ENCODE measurements at regions of chr2 and their contacts with region 1.

Region 1: DNA sequence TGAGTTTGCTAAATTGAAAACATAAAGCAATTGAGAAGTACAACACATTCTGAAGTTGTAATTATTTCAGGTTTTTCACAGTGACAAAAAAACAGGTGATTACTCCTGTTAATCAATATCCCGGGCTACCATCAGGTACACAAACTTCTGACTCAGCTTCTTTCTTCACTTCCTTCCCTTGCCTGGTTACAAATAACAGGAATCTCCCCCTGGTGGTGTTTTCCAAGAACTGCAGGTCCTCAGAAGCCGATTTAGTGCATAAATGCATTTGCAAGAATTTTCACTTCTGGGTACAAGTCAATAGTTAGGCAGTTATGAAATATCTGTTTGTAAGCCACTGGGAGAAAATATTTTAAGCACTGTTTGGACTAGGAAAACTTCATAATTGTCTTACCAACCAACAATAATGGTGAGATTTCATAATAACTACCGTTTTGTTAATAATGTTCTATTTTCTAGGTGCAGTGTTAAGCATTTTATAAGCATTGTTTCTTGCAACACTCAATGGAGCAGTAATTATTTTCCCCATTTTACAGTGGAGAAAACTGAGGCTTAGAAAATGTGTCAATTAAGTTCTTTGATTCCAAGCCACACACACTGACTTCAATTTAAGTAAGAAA is 12.4 kb upstream of the GMCL1 start:
- DNase-seq: peak; percentile 87
- ATAC-seq: peak; percentile 75
- H3K4me3 Mint-ChIP-seq: no peak overlapping the region
- H3K27ac Mint-ChIP-seq: no peak overlapping the region
- H3K4me1 Mint-ChIP-seq: peaks cover 11% of the 10 kb centered on the region
- H3K27me3 Mint-ChIP-seq: no peaks in the 10 kb centered on the region

Region 2: DNA sequence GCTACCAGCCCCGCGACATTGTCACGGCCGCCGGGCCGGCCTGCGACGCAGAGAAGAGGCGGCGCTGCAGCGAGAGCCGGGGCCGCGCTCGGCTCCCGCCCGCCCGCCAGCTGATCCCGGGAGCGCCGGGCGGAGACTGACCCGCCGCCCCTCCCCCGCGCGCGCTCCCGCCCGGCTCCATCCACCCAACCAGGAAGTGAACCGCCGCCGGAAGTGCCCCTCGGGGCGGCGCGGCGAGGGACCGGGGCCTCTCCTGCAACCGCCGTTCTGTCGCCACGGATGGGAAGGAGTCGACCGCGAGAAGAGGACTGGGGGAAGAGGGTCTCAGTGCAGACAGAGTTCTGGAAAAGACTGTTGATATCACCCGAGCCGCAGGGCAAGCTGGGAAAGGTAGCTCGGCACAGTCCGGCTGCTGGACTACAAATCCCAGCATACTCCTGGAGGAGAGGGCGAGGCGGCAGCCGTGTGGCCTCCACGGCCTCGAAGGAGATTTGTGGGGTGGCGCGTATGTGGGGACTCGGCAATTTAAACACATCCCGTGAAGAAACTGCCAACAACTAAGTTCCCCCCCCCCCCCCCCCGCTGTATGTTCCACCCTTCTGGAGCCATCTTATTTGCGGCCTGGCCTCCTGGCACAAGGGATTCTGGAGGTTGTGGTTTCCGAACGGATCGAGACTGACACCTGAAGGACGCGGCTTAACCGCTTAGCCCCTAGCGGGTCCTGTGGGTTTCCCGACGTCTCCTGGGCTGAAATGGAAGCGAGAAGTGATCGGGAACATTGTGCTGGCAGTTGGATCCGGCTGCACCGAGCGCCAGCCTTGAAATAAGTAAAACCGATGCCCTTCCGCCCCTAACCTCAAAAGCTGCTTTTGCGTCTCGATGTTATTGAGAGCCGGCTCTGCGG is 173.2 kb before region 1 on chr2 and contains the start of gene AAK1:
- CTCF ChIA-PET with region 1: interaction called, 17 read pairs
- POLR2A ChIA-PET with region 1: no interaction called
- DNase-seq: peak; percentile 90
- ATAC-seq: peak; percentile 66
- H3K4me3 Mint-ChIP-seq: peak within 1 kb of the TSS; percentile 92
- H3K27ac Mint-ChIP-seq: peak within 1 kb of the TSS; percentile 98
- H3K4me1 Mint-ChIP-seq: peaks cover 56% of the 10 kb centered on the region
- H3K27me3 Mint-ChIP-seq: no peaks in the 10 kb centered on the region
- total RNA-seq, gene AAK1: 105 to 107 TPM

Region 3: GRCh38 chr2:69741619-69742466 is 75.2 kb before region 1 on chr2 and contains the start of gene ANXA4:
- CTCF ChIA-PET with region 1: interaction called, 58 read pairs
- POLR2A ChIA-PET with region 1: interaction called, 5 read pairs
- DNase-seq: peak; percentile 68
- ATAC-seq: peak; percentile 95
- H3K4me3 Mint-ChIP-seq: peak within 1 kb of the TSS; percentile 80
- H3K27ac Mint-ChIP-seq: peak within 1 kb of the TSS; percentile 85
- H3K4me1 Mint-ChIP-seq: peaks cover 19% of the 10 kb centered on the region
- H3K27me3 Mint-ChIP-seq: peaks cover 13% of the 10 kb centered on the region
- total RNA-seq, gene ANXA4: 53.5 to 59.5 TPM

Region 4: DNA sequence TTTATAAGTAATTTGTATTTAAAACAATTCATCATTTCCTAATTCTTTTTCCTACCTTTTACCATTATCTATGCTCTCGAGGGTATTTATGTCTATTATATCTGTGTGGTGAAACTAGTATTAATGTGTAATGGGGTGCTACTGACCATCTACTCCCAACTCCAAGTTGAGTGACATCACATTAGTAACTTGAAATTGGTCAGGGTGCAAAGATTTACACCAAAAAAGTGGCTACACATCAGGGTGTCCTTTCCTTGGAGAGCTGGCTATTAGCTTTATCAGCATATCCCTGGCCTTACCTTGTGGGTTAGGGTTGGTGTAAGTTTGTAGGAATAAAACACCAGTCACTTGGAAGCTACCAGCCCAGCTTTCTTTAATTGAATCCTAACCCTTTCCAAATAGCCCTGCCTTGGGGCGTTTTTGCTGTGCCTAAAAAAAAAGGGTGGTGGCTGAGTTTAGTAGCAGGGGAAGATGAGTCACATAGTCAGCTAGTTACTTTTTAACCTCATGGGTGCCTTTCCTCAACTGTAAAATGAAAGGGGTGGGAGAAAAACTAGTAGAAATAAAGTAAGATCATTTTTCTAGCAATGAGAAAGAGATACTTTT is 61.1 kb before region 1 on chr2:
- CTCF ChIA-PET with region 1: interaction called, 23 read pairs
- POLR2A ChIA-PET with region 1: no interaction called
- DNase-seq: no peak
- ATAC-seq: peak; percentile 55
- H3K4me3 Mint-ChIP-seq: no peak overlapping the region
- H3K27ac Mint-ChIP-seq: no peak overlapping the region
- H3K4me1 Mint-ChIP-seq: peaks cover 15% of the 10 kb centered on the region
- H3K27me3 Mint-ChIP-seq: no peaks in the 10 kb centered on the region

Region 5: DNA sequence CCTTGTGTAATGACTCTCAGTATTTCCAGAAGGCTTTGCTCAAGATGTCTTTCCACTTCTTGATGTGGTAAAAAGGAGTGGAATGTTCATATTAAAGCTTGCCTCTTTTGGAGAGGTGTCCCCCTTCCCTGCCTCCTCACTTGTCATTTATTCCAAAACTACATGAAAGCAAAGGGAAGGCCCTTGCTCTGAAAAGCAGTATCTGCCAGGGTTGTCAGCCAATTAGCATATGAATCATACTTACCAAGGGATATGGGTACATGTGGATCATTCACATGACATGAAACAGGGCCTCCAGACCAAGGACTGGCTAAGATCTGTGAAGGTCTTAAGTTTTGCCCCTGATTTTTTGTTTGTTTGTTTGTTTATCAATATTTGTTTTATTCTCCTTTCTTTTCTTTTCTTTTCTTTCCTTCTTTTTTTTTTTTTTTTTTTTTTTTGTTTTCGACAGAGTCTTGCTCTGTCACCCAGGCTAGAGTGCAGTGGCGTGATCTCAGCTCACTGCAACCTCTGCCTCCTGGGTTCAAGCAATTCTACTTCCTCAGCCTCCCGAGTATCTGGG is 43.7 kb before region 1 on chr2:
- CTCF ChIA-PET with region 1: interaction called, 17 read pairs
- POLR2A ChIA-PET with region 1: no interaction called
- DNase-seq: no peak
- ATAC-seq: peak; percentile 21
- H3K4me3 Mint-ChIP-seq: no peak overlapping the region
- H3K27ac Mint-ChIP-seq: no peak overlapping the region
- H3K4me1 Mint-ChIP-seq: peaks cover 60% of the 10 kb centered on the region
- H3K27me3 Mint-ChIP-seq: no peaks in the 10 kb centered on the region

Region 6: GRCh38 chr2:69798909-69799526 is 18.0 kb before region 1 on chr2:
- CTCF ChIA-PET with region 1: interaction called, 33 read pairs
- POLR2A ChIA-PET with region 1: no interaction called
- DNase-seq: no peak
- ATAC-seq: peak; percentile 44
- H3K4me3 Mint-ChIP-seq: peak overlapping the region; percentile 8
- H3K27ac Mint-ChIP-seq: no peak overlapping the region
- H3K4me1 Mint-ChIP-seq: peaks cover 27% of the 10 kb centered on the region
- H3K27me3 Mint-ChIP-seq: peaks cover 2% of the 10 kb centered on the region

Region 7: DNA sequence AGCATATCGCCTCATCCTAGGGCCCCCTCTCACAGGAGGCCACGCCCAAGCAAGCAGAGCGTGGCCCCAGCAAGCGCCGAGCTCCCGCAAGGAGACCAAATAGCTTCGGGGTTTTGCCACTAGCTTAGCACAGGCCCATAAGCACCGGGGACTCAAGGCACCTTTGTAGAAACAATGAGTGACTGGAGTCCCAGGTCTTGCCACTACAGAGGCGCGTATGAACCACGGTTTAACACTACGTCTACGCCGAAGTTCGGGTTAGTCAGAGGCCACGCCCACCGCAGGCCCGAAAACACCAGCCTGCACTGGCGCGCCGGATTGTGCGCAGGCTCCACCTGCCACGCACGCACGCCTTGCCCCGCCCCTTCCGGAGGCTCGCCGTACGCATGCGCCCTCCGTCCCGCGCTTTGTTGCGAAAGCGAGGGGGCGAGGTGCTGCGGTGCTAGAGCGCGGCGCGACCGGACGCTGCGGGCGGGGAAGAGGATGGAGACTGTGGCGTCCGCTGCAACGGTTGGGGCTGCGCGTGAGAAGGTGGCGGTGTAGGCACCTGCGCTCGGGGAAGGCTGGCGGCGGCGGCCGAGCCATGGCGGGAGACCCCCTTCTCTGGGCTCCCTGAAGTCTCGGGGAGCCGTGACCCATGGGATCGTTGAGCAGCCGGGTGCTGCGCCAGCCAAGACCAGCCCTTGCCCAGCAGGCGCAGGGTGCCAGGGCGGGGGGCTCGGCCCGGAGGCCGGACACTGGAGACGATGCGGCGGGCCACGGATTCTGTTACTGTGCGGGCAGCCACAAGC is 12.4 kb after region 1 on chr2 and contains the start of gene GMCL1:
- CTCF ChIA-PET with region 1: interaction called, 44 read pairs
- POLR2A ChIA-PET with region 1: interaction called, 3 read pairs
- DNase-seq: peak; percentile 99
- ATAC-seq: peak; percentile 93
- H3K4me3 Mint-ChIP-seq: peak within 1 kb of the TSS; percentile 82
- H3K27ac Mint-ChIP-seq: peak within 1 kb of the TSS; percentile 96
- H3K4me1 Mint-ChIP-seq: peaks cover 53% of the 10 kb centered on the region
- H3K27me3 Mint-ChIP-seq: no peaks in the 10 kb centered on the region
- total RNA-seq, gene GMCL1: 25.4 to 31.6 TPM

Region 8: DNA sequence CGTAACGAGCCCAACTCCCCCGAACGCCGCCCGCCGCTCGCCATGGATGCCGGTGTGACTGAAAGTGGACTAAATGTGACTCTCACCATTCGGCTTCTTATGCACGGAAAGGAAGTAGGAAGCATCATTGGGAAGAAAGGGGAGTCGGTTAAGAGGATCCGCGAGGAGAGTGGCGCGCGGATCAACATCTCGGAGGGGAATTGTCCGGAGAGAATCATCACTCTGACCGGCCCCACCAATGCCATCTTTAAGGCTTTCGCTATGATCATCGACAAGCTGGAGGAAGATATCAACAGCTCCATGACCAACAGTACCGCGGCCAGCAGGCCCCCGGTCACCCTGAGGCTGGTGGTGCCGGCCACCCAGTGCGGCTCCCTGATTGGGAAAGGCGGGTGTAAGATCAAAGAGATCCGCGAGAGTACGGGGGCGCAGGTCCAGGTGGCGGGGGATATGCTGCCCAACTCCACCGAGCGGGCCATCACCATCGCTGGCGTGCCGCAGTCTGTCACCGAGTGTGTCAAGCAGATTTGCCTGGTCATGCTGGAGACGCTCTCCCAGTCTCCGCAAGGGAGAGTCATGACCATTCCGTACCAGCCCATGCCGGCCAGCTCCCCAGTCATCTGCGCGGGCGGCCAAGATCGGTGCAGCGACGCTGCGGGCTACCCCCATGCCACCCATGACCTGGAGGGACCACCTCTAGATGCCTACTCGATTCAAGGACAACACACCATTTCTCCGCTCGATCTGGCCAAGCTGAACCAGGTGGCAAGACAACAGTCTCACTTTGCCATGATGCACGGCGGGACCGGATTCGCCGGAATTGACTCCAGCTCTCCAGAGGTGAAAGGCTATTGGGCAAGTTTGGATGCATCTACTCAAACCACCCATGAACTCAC is 270.9 kb after region 1 on chr2:
- CTCF ChIA-PET with region 1: no interaction called
- POLR2A ChIA-PET with region 1: no interaction called
- DNase-seq: peak; percentile 65
- ATAC-seq: no peak
- H3K4me3 Mint-ChIP-seq: peak overlapping the region; percentile 97
- H3K27ac Mint-ChIP-seq: peak overlapping the region; percentile 100
- H3K4me1 Mint-ChIP-seq: peaks cover 59% of the 10 kb centered on the region
- H3K27me3 Mint-ChIP-seq: no peaks in the 10 kb centered on the region